T-cell (primary cell): ENCODE measurements at regions of chr16 and their contacts with region 1.

Region 1: GRCh38 chr16:76490036-76490639 is 212.9 kb downstream of the CNTNAP4 start:
- DNase-seq: no peak
- ATAC-seq: no peak
- H3K4me3 ChIP-seq: no peak overlapping the region
- H3K4me3 Mint-ChIP-seq: no peak overlapping the region
- H3K27ac ChIP-seq: no peak overlapping the region
- H3K27ac Mint-ChIP-seq: no peak overlapping the region
- H3K4me1 ChIP-seq: no peaks in the 10 kb centered on the region
- H3K4me1 Mint-ChIP-seq: no peaks in the 10 kb centered on the region
- H3K27me3 ChIP-seq: no peaks in the 10 kb centered on the region
- H3K27me3 Mint-ChIP-seq: no peaks in the 10 kb centered on the region

Region 2: DNA sequence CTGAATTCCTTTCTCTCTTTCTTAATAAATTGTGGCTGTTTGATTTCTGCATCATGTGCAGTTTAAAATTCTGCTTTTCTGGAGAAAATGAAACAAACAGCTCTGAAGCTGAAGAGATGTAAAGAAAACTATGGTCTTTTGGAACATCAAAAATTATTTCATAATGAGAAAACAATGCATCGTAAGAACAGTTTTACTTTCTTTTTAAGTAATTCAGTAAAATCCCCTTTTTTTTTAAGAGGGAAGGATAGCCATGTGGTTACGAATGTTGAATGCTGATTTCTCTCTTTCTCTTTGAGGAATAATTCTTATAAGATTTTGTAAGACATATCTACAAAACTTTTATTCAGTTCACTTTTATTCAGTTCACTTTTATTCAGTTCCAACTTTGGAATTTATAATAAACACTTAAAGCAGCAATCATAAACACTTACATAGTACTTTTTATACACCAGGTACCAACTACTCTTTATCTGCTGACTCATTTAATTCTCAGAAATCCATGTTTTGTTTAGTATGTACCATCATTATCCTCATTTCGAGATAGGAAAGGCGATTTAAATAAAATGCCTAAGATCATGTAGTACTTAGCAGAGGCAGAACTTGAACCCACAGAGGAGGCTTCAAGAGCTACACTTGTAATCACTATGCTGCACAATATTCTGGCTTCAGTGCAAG is 186.4 kb before region 1 on chr16:
- CTCF ChIA-PET with region 1: no interaction called
- POLR2A ChIA-PET with region 1: no interaction called
- DNase-seq: no peak
- ATAC-seq: no peak
- H3K4me3 ChIP-seq: no peak overlapping the region
- H3K4me3 Mint-ChIP-seq: no peak overlapping the region
- H3K27ac ChIP-seq: no peak overlapping the region
- H3K27ac Mint-ChIP-seq: no peak overlapping the region
- H3K4me1 ChIP-seq: no peaks in the 10 kb centered on the region
- H3K4me1 Mint-ChIP-seq: no peaks in the 10 kb centered on the region
- H3K27me3 ChIP-seq: no peaks in the 10 kb centered on the region
- H3K27me3 Mint-ChIP-seq: no peaks in the 10 kb centered on the region

Region 3: DNA sequence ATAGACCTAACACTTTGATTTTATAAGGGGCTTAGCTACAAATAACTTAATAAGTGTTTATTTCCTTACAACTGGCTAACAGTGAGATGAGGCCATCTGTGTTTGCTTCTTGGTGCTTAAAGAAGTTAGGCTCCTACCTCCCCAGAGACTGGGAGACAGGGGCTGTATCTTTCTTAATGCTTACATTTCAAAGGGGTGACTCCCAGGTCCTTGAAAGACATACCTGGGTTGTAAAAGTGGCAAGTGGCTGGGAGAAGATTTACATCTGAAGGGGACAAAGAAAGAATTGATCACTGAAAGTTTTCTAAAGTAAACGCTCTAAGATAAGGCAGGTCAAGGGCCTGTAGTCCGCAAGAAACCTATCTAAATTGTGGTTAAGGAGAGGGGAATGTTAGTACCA is 16.1 kb before region 1 on chr16:
- CTCF ChIA-PET with region 1: no interaction called
- POLR2A ChIA-PET with region 1: no interaction called
- DNase-seq: no peak
- ATAC-seq: no peak
- H3K4me3 ChIP-seq: no peak overlapping the region
- H3K4me3 Mint-ChIP-seq: no peak overlapping the region
- H3K27ac ChIP-seq: no peak overlapping the region
- H3K27ac Mint-ChIP-seq: no peak overlapping the region
- H3K4me1 ChIP-seq: no peaks in the 10 kb centered on the region
- H3K4me1 Mint-ChIP-seq: no peaks in the 10 kb centered on the region
- H3K27me3 ChIP-seq: no peaks in the 10 kb centered on the region
- H3K27me3 Mint-ChIP-seq: no peaks in the 10 kb centered on the region

Region 4: GRCh38 chr16:76511203-76511602 is 21.1 kb after region 1 on chr16:
- CTCF ChIA-PET with region 1: no interaction called
- POLR2A ChIA-PET with region 1: interaction called in 1 of 2 experiments, 10 read pairs
- DNase-seq: no peak
- ATAC-seq: no peak
- H3K4me3 ChIP-seq: no peak overlapping the region
- H3K4me3 Mint-ChIP-seq: no peak overlapping the region
- H3K27ac ChIP-seq: no peak overlapping the region
- H3K27ac Mint-ChIP-seq: no peak overlapping the region
- H3K4me1 ChIP-seq: no peaks in the 10 kb centered on the region
- H3K4me1 Mint-ChIP-seq: no peaks in the 10 kb centered on the region
- H3K27me3 ChIP-seq: no peaks in the 10 kb centered on the region
- H3K27me3 Mint-ChIP-seq: no peaks in the 10 kb centered on the region

Region 5: DNA sequence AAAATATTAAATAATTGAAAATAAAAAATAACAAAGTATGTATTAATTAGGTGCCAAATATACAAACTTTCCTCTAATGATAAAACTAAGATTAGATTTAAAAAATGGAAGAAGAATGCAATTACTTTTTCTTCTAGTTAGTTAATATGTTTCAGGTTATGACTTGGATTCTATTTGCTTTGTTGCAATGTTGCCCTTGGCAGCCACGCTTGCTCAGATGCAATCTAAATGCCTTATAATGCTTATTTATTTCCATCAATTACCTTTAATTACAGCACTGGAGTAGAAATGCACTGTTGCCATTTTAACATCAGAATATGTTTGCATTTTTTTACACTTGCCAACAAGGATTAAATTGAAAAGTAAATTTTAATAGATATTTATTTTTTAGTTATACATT is 50.9 kb after region 1 on chr16:
- CTCF ChIA-PET with region 1: no interaction called
- POLR2A ChIA-PET with region 1: no interaction called
- DNase-seq: no peak
- ATAC-seq: no peak
- H3K4me3 ChIP-seq: no peak overlapping the region
- H3K4me3 Mint-ChIP-seq: no peak overlapping the region
- H3K27ac ChIP-seq: no peak overlapping the region
- H3K27ac Mint-ChIP-seq: no peak overlapping the region
- H3K4me1 ChIP-seq: no peaks in the 10 kb centered on the region
- H3K4me1 Mint-ChIP-seq: no peaks in the 10 kb centered on the region
- H3K27me3 ChIP-seq: no peaks in the 10 kb centered on the region
- H3K27me3 Mint-ChIP-seq: no peaks in the 10 kb centered on the region

Region 6: GRCh38 chr16:76622876-76623275 is 132.7 kb after region 1 on chr16:
- CTCF ChIA-PET with region 1: no interaction called
- POLR2A ChIA-PET with region 1: no interaction called
- DNase-seq: no peak
- ATAC-seq: no peak
- H3K4me3 ChIP-seq: no peak overlapping the region
- H3K4me3 Mint-ChIP-seq: no peak overlapping the region
- H3K27ac ChIP-seq: no peak overlapping the region
- H3K27ac Mint-ChIP-seq: no peak overlapping the region
- H3K4me1 ChIP-seq: no peaks in the 10 kb centered on the region
- H3K4me1 Mint-ChIP-seq: no peaks in the 10 kb centered on the region
- H3K27me3 ChIP-seq: no peaks in the 10 kb centered on the region
- H3K27me3 Mint-ChIP-seq: no peaks in the 10 kb centered on the region